Body of pancreas (tissue), 4 donors: ENCODE measurements at regions of chr18 and their contacts with region 1.

Region 1: GRCh38 chr18:44819944-44820510 is 139.3 kb downstream of the SETBP1 start:
- DNase-seq: peak; percentile 60 to 64 (median 62)
- ATAC-seq: peak; percentile 78
- H3K4me3 ChIP-seq: no peak overlapping the region
- H3K27ac ChIP-seq: peak overlapping the region in 3 of 4 donors; percentile 20 to 70 (median 54)
- H3K4me1 ChIP-seq: peaks cover 57% of the 10 kb centered on the region
- H3K27me3 ChIP-seq: no peaks in the 10 kb centered on the region
- CTCF ChIP-seq: no peak
- POLR2A ChIP-seq: no peak

Region 2: GRCh38 chr18:44909191-44909719 is 89.2 kb after region 1 on chr18:
- intact Hi-C with region 1: loop called (anchors 10 kb)
- DNase-seq: no peak
- ATAC-seq: no peak
- H3K4me3 ChIP-seq: no peak overlapping the region
- H3K27ac ChIP-seq: no peak overlapping the region
- H3K4me1 ChIP-seq: peaks cover 37% of the 10 kb centered on the region
- H3K27me3 ChIP-seq: no peaks in the 10 kb centered on the region
- CTCF ChIP-seq: no peak
- POLR2A ChIP-seq: no peak